ENCODE measurements at regions of chr2 and their contacts with region 1.

Region 1: DNA sequence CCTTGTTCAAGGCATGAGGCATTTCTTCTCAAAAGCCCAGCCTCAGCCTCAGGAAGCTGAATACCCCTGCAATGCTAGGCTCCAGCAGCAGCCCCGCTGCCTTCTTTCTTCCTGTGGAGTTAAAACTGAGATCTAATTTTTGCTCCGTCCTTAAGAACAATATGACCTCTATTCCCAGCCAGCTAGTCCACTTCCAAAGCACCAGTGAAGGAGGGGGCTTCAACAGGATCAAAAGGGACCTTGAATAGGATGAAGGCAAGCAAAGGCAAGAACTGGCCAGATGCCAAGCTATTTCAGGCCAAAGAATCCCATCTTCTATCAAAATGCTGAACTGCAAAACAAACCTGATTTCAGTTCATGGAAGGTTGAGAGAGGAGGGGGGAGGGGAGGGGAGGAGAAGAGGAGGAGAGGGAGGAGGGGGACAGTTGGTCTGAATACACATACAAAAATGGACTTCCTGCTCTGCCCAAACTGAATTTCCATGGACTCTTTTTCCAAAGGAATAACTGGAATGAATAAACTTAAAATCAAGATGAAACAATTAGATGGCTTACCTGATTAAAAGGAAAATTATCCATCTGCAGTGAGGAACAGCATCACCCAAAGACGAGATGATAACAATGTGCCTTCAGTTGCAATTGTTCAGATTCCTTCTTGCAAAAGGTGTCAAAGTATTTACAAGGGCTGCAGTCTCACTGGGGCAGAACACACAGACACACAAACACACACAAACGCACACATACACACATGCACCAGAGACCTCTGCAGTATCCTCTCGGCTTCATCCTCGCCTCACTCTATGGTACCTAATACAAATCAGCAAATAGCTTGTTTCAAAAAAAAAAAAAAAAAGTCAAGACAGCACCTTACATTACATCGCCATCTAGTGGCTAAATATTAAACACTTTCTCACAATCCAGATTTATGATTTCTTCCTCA is at the start of gene SCN1A:
- DNase-seq: no peak
- H3K4me3 ChIP-seq: no peak within 1 kb of the TSS
- H3K27ac ChIP-seq: no peak within 1 kb of the TSS
- H3K4me1 ChIP-seq: peaks cover 0 to 6% (median 5%) of the 10 kb centered on the region in 4 experiments; a peak in 3 of 7 replicates
- H3K27me3 ChIP-seq: no peaks in the 10 kb centered on the region
- CTCF ChIP-seq: peak in 2 of 3 experiments; percentile 39 to 54; a peak in 2 of 4 replicates
- EP300 ChIP-seq: no peak
- POLR2A ChIP-seq: no peak
- RAD21 ChIP-seq: peak; percentile 66 to 72
- total RNA-seq, gene SCN1A: 1.3 and 1.9 TPM in 2 replicates

Region 2: DNA sequence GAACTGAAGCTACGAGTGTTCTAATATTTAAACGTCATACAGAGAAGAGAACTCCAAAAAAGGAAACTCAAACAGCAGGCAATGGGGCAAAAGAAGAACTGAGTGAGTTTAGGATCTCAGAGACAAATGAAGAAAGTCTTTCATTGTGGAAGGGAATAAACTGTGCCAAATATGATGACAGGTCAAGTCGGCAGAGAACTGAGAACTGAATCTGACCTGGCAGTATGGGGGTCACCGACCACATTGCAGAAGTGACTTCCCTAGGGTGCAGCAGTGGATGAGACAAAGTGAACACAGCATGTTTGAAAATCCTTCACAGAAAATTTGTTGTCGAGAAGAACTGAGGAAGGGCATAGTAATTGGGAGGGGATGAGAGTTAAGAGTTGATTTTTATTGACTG is 229.8 kb before region 1 on chr2:
- CTCF ChIA-PET with region 1: no interaction called
- POLR2A ChIA-PET with region 1: no interaction called
- DNase-seq: no peak
- H3K4me3 ChIP-seq: no peak overlapping the region
- H3K27ac ChIP-seq: no peak overlapping the region
- H3K4me1 ChIP-seq: no peaks in the 10 kb centered on the region
- H3K27me3 ChIP-seq: no peaks in the 10 kb centered on the region
- CTCF ChIP-seq: no peak
- EP300 ChIP-seq: no peak
- POLR2A ChIP-seq: no peak
- RAD21 ChIP-seq: no peak

Region 3: DNA sequence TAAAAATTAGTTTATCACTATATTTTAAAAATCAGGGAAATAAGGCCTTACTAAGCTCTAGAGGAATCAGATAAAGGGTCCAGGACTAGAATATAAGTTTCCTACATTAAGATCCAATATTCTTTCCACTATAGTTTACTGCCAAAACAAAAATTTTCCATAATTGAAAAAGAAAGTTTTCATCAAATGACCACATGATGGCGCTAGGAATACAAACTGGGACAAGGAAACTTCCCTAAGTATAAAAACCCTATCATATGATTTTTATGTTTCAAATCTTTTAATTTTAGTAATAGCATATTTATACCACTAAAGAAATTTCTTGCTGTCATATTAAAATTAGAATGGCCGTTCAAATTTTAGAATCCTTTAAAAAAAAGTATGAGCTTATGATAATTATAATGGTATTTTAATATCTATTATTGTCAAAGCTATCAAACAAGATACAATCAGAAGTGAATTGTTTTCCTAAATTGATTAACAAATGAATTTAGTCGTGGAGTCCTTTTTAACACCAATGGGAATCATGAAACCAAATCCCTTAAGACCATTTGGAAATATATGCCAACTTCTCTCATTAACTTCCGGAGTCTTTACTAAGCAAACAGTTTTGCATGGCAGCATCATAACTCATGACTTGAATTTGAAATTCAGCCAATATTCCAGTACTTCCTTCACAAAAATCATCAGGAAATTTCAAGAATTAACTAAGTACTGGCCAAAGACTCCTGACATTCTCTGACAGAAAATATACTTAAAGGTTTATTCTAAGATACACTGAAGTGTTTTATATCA is 69.9 kb before region 1 on chr2:
- CTCF ChIA-PET with region 1: interaction called, 71 read pairs
- POLR2A ChIA-PET with region 1: no interaction called
- DNase-seq: no peak
- H3K4me3 ChIP-seq: no peak overlapping the region
- H3K27ac ChIP-seq: no peak overlapping the region
- H3K4me1 ChIP-seq: no peaks in the 10 kb centered on the region
- H3K27me3 ChIP-seq: no peaks in the 10 kb centered on the region
- CTCF ChIP-seq: peak in 2 of 3 experiments; percentile 28 to 31; a peak in 2 of 4 replicates
- EP300 ChIP-seq: no peak
- POLR2A ChIP-seq: no peak
- RAD21 ChIP-seq: peak in 1 of 2 experiments; percentile 48; a peak in 3 of 4 replicates

Region 4: GRCh38 chr2:166106431-166107015 is 21.0 kb before region 1 on chr2:
- CTCF ChIA-PET with region 1: interaction called, 18 read pairs
- POLR2A ChIA-PET with region 1: interaction called, 3 read pairs
- DNase-seq: no peak
- H3K4me3 ChIP-seq: no peak overlapping the region
- H3K27ac ChIP-seq: no peak overlapping the region
- H3K4me1 ChIP-seq: no peaks in the 10 kb centered on the region
- H3K27me3 ChIP-seq: no peaks in the 10 kb centered on the region
- CTCF ChIP-seq: peak in 2 of 3 experiments; percentile 73 to 82; a peak in 3 of 4 replicates
- EP300 ChIP-seq: no peak
- POLR2A ChIP-seq: no peak
- RAD21 ChIP-seq: peak; percentile 84 to 85

Region 5: DNA sequence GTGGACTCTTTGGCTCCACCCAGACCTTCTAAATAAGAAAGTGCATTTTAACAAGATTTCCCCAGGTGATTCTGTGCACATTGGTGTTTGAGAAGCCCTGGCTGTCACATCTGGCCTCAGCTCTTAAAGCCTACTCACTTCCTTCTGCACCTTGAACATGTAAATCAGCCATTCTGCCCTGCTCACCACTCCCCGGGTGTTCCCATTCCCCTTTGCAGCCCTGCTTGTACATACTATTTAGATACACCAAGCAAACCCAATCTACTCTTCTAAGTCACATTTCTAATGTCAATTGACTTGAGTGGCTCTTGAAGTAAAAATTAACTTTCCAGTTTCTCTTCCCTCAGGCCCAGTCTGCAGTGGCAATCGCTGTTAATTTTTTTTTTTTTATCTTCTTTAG is 13.4 kb after region 1 on chr2:
- CTCF ChIA-PET with region 1: interaction called, 14 read pairs
- POLR2A ChIA-PET with region 1: no interaction called
- DNase-seq: no peak
- H3K4me3 ChIP-seq: no peak overlapping the region
- H3K27ac ChIP-seq: no peak overlapping the region
- H3K4me1 ChIP-seq: no peaks in the 10 kb centered on the region
- H3K27me3 ChIP-seq: no peaks in the 10 kb centered on the region
- CTCF ChIP-seq: no peak
- EP300 ChIP-seq: no peak
- POLR2A ChIP-seq: no peak
- RAD21 ChIP-seq: no peak